WTC11 (cell line): ENCODE measurements at regions of chr19 and their contacts with region 1.

Region 1: GRCh38 chr19:1863726-1864480 is 524 bp upstream of the KLF16 start:
- DNase-seq: peak; percentile 94
- ATAC-seq: peak; percentile 68
- H3K4me3 Mint-ChIP-seq: peak overlapping the region; percentile 68
- H3K27ac Mint-ChIP-seq: no peak overlapping the region
- H3K4me1 Mint-ChIP-seq: peaks cover 18% of the 10 kb centered on the region
- H3K27me3 Mint-ChIP-seq: peaks cover 11% of the 10 kb centered on the region
- CTCF ChIP-seq: no peak

Region 2: GRCh38 chr19:1875646-1876495 is 12.0 kb after region 1 on chr19:
- CTCF ChIA-PET with region 1: interaction called, 48 read pairs
- POLR2A ChIA-PET with region 1: interaction called, 15 read pairs
- DNase-seq: peak; percentile 88
- ATAC-seq: peak; percentile 84
- H3K4me3 Mint-ChIP-seq: peak overlapping the region; percentile 99
- H3K27ac Mint-ChIP-seq: peak overlapping the region; percentile 86
- H3K4me1 Mint-ChIP-seq: peaks cover 16% of the 10 kb centered on the region
- H3K27me3 Mint-ChIP-seq: no peaks in the 10 kb centered on the region
- CTCF ChIP-seq: no peak

Region 3: GRCh38 chr19:1884719-1885334 is 20.9 kb after region 1 on chr19:
- CTCF ChIA-PET with region 1: interaction called, 14 read pairs
- POLR2A ChIA-PET with region 1: interaction called, 3 read pairs
- DNase-seq: no peak
- ATAC-seq: peak; percentile 12
- H3K4me3 Mint-ChIP-seq: peak overlapping the region; percentile 98
- H3K27ac Mint-ChIP-seq: peak overlapping the region; percentile 91
- H3K4me1 Mint-ChIP-seq: peaks cover 27% of the 10 kb centered on the region
- H3K27me3 Mint-ChIP-seq: peaks cover 2% of the 10 kb centered on the region; the same call in 1 of the 2 replicates
- CTCF ChIP-seq: no peak